GM18951 (cell line): ENCODE measurements at regions of chr9 and their contacts with region 1.

Region 1: DNA sequence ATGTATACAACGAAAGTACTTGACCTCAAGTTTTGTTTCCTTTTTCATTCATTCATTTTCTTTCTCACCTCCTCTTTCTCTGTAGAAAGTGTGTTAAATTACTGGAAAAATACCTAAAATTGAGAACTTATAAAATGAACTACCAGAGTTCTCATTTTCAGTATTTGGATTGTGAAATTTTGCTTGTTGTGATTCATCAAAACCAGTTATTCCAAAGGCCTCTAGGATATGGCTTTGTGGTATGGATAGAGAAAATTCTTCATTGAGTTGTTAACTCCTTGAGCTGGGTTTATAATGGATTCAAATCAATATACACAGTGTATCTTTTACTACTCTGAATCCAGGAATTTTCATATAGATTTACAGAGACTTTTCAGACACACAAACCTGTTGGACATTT is 287.6 kb downstream of the KDM4C start:
- POLR2A ChIP-seq: no peak

Region 2: GRCh38 chr9:6272229-6272598 is 773.1 kb before region 1 on chr9:
- in situ Hi-C with region 1: no loop called
- POLR2A ChIP-seq: no peak

Region 3: GRCh38 chr9:7081065-7081600 is 35.8 kb after region 1 on chr9:
- in situ Hi-C with region 1: no loop called
- POLR2A ChIP-seq: no peak

Region 4: DNA sequence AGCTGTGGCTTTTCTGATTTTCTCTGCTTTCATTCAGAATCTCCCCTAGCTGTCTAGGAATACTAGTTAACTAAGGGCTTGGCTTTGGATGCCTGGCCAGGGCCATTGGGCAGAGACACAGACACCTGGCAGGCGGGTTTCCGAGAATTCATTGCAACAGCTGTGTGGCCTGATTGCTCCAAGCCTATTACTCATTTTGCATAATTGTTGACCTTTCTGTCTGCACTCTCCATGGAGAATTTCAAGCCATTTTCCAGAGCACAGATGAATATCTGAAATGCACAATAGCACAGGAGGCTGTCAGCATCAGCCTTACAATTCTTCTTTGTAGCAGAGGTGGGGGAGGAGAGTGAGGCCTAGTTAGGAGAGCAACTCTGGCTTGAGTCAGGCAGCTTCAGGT is 443.7 kb after region 1 on chr9:
- in situ Hi-C with region 1: no loop called
- POLR2A ChIP-seq: no peak

Region 5: DNA sequence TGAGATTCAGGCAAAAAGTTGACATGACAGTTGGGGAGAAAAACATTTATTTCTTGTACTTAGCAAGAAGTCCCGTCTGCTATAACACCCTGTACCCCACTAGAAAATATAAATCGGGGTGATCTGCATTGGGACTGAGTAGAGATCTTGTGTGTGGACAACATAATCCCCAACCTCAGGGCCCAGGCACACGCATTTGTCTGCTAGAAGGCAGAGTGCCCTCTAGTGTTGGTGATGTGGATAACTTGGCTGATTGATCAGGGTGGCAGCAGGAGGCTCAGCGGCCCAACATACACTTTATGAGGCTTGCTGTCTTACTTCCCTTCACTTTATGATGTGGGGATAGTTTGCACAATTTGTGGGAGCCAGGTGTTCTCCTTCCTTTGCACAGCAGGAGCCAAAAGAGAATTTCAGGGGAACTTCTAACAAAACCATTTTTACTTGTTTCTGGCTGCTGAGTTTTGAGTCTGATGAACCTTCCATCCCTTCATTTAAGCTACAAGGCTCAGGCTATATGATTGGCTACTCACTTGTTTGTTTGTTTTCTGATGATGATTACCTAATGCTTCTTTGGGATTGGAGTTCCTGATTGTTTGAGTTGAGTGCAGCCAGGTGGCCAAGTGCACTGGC is 491.1 kb after region 1 on chr9:
- in situ Hi-C with region 1: loop called (anchors 25 kb)
- POLR2A ChIP-seq: no peak